Cardiac septum (tissue), 1 donor: ENCODE measurements at regions of chr1 and their contacts with region 1.

Region 1: DNA sequence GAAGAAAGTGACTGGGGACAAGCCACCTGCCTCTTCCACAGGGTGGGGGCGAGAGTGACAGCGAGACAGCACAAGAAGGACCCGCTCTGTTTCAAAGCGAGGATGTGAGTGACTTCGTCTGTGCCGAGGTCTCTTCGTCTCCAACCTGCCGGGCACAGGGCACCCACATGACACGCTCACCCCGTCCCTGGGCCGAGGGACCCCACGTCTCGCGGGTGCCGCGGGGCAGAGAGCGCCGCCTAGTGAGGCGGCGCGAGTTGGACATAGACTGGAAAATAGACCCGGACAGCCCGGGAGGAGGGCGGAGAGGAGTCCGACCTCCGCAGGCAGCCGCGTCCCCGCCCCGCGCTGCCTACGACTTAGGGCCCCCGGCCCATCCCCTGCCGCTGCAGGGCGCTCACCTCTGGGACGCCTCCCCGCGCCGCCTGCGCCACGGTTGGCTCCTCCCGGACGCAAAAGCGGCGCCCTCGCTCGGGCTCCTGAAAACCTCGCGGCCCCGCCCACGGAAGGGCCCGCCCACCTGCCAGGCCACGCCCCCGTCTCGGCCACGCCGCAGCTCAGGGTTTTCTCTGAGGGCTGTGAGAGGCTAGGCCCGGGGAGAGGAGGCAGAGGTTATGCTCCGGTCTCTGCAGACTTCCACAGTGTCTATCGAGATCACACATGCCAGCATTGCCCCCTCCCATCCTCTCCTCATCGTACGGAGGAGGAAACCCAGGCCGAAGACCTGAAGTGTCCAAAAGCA is at the start of gene TLR5:
- DNase-seq: peak; percentile 97
- total RNA-seq, gene TLR5: 1.6 TPM

Region 2: GRCh38 chr1:223207293-223208066 is 64.5 kb after region 1 on chr1:
- intact Hi-C with region 1: loop called (anchors 5 kb)
- DNase-seq: no peak

Region 3: GRCh38 chr1:223363856-223364684 is 221.1 kb after region 1 on chr1 and contains the start of gene SUSD4:
- intact Hi-C with region 1: loop called (anchors 5 kb)
- DNase-seq: no peak
- total RNA-seq, gene SUSD4: 6.4 TPM

Region 4: GRCh38 chr1:223531742-223532341 is 388.9 kb after region 1 on chr1:
- intact Hi-C with region 1: no loop called
- DNase-seq: no peak